ENCODE measurements at regions of chr3 and their contacts with region 1.

Region 1: GRCh38 chr3:66276705-66277274 is 56.0 kb downstream of the SLC25A26 start:
- DNase-seq: peak in 3 of 5 donors; percentile 39 to 54 (median 41)
- ATAC-seq: peak in 2 of 4 donors; percentile 42 to 64
- H3K4me3 ChIP-seq: no peak overlapping the region
- H3K27ac ChIP-seq: no peak overlapping the region
- H3K4me1 ChIP-seq: peaks cover 0 to 5% (median 0%) of the 10 kb centered on the region in 12 donors
- H3K27me3 ChIP-seq: no peaks in the 10 kb centered on the region
- CTCF ChIP-seq: peak; percentile 50 to 86 (median 71)
- POLR2A ChIP-seq: no peak

Region 2: DNA sequence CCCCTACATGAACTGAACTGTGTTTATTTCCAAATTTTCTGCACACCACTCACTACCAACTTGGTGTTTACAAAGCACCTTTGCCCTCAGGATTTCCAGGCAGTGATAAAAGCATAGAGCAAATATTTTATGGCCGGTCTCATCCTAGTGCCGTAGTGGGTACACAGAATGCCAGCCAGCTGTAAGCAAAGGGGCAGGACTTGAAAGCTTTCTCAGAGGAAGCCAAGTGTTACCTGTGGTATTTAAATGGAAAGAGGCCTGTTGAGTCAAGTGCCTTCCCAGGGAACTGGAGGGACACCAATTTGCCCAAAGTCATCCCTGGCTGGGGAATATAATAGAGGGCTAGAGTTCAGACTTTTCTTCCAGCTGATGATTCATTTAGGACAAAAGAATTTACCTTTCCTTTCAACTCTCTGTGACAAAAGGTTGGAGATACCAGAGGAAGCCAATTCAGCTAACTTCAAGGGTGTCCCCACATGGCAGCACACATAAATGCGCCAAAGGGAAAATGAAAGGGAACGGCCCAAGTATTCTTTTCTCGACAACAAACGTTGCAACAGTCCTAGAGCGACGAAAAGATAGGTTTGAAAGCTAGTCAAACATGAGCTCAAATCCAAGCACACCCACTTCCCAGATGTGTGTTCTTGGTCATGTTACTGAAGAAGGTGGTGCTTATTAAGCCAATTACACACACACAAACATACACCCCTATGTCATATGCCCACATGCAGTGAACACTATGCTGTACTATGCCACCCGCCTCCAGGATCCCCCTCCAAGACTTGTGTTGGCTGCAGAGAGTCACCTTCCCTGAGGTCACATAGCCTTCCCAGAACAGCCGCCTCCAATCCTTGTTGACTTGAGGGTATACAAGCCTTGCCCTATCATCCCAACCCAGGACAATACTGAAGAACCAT is 265.8 kb before region 1 on chr3:
- intact Hi-C with region 1: no loop called
- DNase-seq: no peak
- ATAC-seq: peak in 3 of 4 donors; percentile 21 to 49 (median 33)
- H3K4me3 ChIP-seq: no peak overlapping the region
- H3K27ac ChIP-seq: peak overlapping the region in 8 of 12 donors; percentile 12 to 60 (median 45)
- H3K4me1 ChIP-seq: peaks cover 0 to 73% (median 25%) of the 10 kb centered on the region in 12 donors
- H3K27me3 ChIP-seq: no peaks in the 10 kb centered on the region
- CTCF ChIP-seq: peak in 1 of 12 donors; percentile 20
- POLR2A ChIP-seq: no peak

Region 3: DNA sequence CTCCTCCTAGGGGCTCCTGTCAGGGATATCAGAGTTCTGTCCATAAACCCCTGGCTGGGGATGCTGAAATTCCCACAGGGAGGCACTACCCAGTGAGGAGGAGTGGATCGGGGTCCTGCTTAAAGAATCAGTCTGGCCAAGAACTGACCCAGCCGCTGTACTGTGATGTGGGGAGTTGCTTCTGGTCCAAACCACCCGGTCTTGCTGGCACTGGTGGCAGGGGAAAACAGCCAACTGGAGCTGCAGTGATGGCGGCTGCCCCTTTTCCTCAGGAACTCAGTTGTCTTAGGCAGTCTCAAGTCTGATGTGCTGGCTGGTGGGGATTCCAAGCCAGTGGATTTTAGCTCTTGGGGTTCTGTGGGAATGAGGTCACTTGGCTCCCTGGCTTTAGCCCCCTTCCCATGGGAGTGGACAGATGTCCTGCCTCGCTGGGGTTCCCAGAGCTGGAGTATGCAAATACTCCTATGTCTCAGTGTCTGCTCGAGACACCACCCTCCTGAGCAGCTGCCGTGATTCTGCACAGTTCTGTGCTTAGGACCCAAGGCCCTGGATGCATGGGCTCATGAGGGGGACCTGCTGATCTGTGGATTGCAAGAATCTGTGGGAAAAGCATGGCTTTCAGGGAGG is 41.1 kb after region 1 on chr3:
- intact Hi-C with region 1: no loop called
- DNase-seq: peak in 1 of 5 donors; percentile 35
- ATAC-seq: peak in 1 of 4 donors; percentile 34
- H3K4me3 ChIP-seq: no peak overlapping the region
- H3K27ac ChIP-seq: no peak overlapping the region
- H3K4me1 ChIP-seq: peaks cover 0 to 20% (median 0%) of the 10 kb centered on the region in 12 donors
- H3K27me3 ChIP-seq: no peaks in the 10 kb centered on the region
- CTCF ChIP-seq: no peak
- POLR2A ChIP-seq: no peak

Region 4: GRCh38 chr3:66372681-66373350 is 96.0 kb after region 1 on chr3:
- intact Hi-C with region 1: loop called (anchors 1 to 5 kb)
- DNase-seq: peak; percentile 63 to 82 (median 67)
- ATAC-seq: peak; percentile 73 to 88 (median 76)
- H3K4me3 ChIP-seq: no peak overlapping the region
- H3K27ac ChIP-seq: peak overlapping the region in 10 of 12 donors; percentile 13 to 81 (median 57)
- H3K4me1 ChIP-seq: peaks cover 0 to 48% (median 15%) of the 10 kb centered on the region in 12 donors
- H3K27me3 ChIP-seq: no peaks in the 10 kb centered on the region
- CTCF ChIP-seq: peak; percentile 21 to 72 (median 55)
- POLR2A ChIP-seq: no peak

Region 5: DNA sequence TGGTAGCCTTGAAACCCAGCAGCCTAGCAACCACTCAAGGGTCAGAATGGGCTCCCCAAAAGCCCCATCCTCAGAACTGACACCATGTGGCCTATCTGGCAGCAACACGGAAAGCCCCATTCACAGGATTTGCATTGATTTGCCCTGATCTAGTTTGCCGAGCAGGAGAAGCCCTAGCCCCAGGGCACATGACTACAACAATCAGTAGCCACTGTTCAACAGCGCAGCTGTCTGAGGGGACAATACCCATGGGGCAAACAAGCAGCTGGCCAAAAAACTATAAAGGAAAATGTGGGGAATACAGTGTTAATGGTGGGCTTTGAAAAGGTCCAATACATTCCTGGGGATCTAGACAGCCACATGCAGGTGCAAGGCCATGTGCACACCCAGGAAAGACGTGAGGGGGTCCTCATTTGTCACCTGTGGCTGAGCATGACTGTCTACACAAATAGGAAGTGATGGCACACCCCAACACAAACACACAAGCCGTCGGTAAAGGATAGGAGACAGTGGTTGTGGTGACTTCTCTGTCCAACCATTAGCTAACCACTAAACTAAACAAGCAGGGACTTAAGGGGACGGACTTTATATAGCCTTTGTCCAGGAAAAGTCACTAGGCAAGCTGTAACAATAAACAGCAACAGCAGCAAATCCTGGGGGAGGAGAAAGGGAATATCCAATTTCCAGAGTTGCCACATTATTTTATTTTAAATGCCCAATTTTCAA is 110.3 kb after region 1 on chr3:
- intact Hi-C with region 1: loop called in 1 of 10 experiments (anchors 5 kb)
- DNase-seq: no peak
- ATAC-seq: no peak
- H3K4me3 ChIP-seq: no peak overlapping the region
- H3K27ac ChIP-seq: no peak overlapping the region
- H3K4me1 ChIP-seq: peaks cover 0 to 11% (median 0%) of the 10 kb centered on the region in 12 donors
- H3K27me3 ChIP-seq: no peaks in the 10 kb centered on the region
- CTCF ChIP-seq: no peak
- POLR2A ChIP-seq: no peak

Region 6: GRCh38 chr3:66500576-66501482 is 224.0 kb after region 1 on chr3 and contains the start of gene LRIG1:
- intact Hi-C with region 1: loop called in 4 of 10 experiments (anchors 10 kb)
- DNase-seq: peak; percentile 100
- ATAC-seq: peak; percentile 96 to 97 (median 97)
- H3K4me3 ChIP-seq: peak within 1 kb of the TSS; percentile 81 to 98 (median 92)
- H3K27ac ChIP-seq: peak within 1 kb of the TSS; percentile 90 to 98 (median 94)
- H3K4me1 ChIP-seq: peaks cover 0 to 45% (median 36%) of the 10 kb centered on the region in 12 donors
- H3K27me3 ChIP-seq: no peaks in the 10 kb centered on the region
- CTCF ChIP-seq: peak; percentile 20 to 69 (median 51)
- POLR2A ChIP-seq: peak; percentile 33 to 86
- total RNA-seq, gene LRIG1: 71.0 to 161 (median 98.3) TPM

Region 7: GRCh38 chr3:66822186-66823008 is 545.6 kb after region 1 on chr3:
- intact Hi-C with region 1: loop called (anchors 2 to 5 kb)
- DNase-seq: peak in 4 of 5 donors; percentile 28 to 50 (median 36)
- ATAC-seq: peak in 3 of 4 donors; percentile 74 to 87 (median 83)
- H3K4me3 ChIP-seq: no peak overlapping the region
- H3K27ac ChIP-seq: no peak overlapping the region
- H3K4me1 ChIP-seq: peaks cover 0 to 2% (median 0%) of the 10 kb centered on the region in 12 donors
- H3K27me3 ChIP-seq: no peaks in the 10 kb centered on the region
- CTCF ChIP-seq: peak; percentile 55 to 82 (median 72)
- POLR2A ChIP-seq: no peak

Measured in heart left ventricle (tissue), 16 donors.